Sigmoid colon (tissue), 7 donors: ENCODE measurements at regions of chr12 and their contacts with region 1.

Region 1: GRCh38 chr12:56189176-56189917 is at the start of gene SMARCC2:
- DNase-seq: peak; percentile 95
- H3K4me3 ChIP-seq: peak within 1 kb of the TSS; percentile 84 to 98 (median 93)
- H3K27ac ChIP-seq: peak within 1 kb of the TSS; percentile 91 to 95 (median 92)
- H3K4me1 ChIP-seq: peaks cover 0 to 32% (median 25%) of the 10 kb centered on the region in 4 donors
- H3K27me3 ChIP-seq: no peaks in the 10 kb centered on the region
- CTCF ChIP-seq: peak in 3 of 4 experiments; percentile 39 to 72 (median 63)
- EP300 ChIP-seq: no peak
- POLR2A ChIP-seq: no peak
- total RNA-seq, gene SMARCC2: 55.7 to 135 (median 70.7) TPM

Region 2: GRCh38 chr12:56117778-56118687 is 71.3 kb before region 1 on chr12 and contains the start of gene ZC3H10:
- intact Hi-C with region 1: loop called (anchors 1 kb)
- DNase-seq: peak; percentile 99
- H3K4me3 ChIP-seq: peak within 1 kb of the TSS; percentile 59 to 88 (median 68)
- H3K27ac ChIP-seq: peak within 1 kb of the TSS; percentile 87 to 98 (median 94)
- H3K4me1 ChIP-seq: peaks cover 0 to 46% (median 30%) of the 10 kb centered on the region in 4 donors
- H3K27me3 ChIP-seq: no peaks in the 10 kb centered on the region
- CTCF ChIP-seq: peak in 3 of 4 experiments; percentile 30 to 33 (median 32)
- EP300 ChIP-seq: peak in 2 of 4 donors; percentile 2 to 85
- POLR2A ChIP-seq: peak; percentile 88 to 91
- total RNA-seq, gene ZC3H10: 3.9 to 6.9 (median 4.8) TPM

Region 3: DNA sequence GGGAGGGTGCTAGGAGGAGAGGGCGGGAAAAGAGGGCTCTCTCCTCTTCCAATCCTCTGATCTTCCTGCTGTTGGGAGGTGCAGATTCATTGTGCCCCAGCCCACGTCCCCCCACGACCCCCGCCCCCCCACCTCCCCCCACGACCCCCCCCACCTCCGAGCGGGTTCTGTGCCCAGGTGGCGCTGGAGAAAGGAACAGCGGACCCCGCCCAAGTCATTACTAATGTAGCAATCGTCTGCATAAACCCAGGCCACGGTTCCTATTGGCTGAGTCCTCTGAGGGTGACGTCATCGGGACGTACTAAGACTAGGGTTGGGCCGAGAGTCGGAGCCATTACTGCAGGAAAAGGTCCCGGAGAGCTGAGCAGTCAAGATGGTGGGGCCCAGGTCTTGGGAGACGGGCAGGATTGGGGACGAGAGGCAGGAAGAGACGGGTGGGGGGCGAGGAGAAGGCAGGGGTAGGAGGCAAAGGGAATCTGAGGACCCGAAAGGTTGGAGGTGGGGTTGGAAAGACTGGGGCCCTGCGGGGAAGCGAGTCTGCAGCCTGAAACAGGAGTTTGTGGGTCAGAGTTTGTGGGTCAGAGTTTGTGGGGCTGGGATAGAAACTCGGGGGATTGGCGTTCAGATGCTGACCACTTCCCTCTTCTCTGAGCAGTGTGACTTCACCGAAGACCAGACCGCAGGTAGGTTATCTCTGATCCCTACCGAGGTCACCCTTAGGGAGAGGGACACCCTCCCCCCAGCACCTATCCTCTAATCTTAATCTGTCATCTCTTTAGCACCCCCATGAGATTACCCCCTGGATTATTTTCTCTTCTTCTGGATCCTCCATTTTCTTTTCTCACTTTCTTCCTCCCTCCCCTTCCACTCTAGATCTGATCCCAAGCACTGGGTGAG is 31.1 kb before region 1 on chr12 and contains the start of gene MYL6:
- intact Hi-C with region 1: loop called (anchors 1 kb)
- DNase-seq: peak; percentile 99
- H3K4me3 ChIP-seq: peak within 1 kb of the TSS; percentile 61 to 99 (median 78)
- H3K27ac ChIP-seq: peak within 1 kb of the TSS; percentile 93 to 99 (median 94)
- H3K4me1 ChIP-seq: peaks cover 0 to 59% (median 43%) of the 10 kb centered on the region in 4 donors
- H3K27me3 ChIP-seq: no peaks in the 10 kb centered on the region
- CTCF ChIP-seq: no peak
- EP300 ChIP-seq: no peak
- POLR2A ChIP-seq: peak; percentile 100
- total RNA-seq, gene MYL6: 6,491 to 9,553 (median 8,571) TPM

Region 4: GRCh38 chr12:56258057-56258819 is 68.9 kb after region 1 on chr12 and contains the start of gene ANKRD52:
- intact Hi-C with region 1: loop called (anchors 5 kb)
- DNase-seq: peak; percentile 87
- H3K4me3 ChIP-seq: peak within 1 kb of the TSS; percentile 80 to 86 (median 82)
- H3K27ac ChIP-seq: peak within 1 kb of the TSS; percentile 90 to 96 (median 92)
- H3K4me1 ChIP-seq: peaks cover 0 to 28% (median 26%) of the 10 kb centered on the region in 4 donors
- H3K27me3 ChIP-seq: no peaks in the 10 kb centered on the region
- CTCF ChIP-seq: peak in 2 of 4 experiments; percentile 11 to 90
- EP300 ChIP-seq: no peak
- POLR2A ChIP-seq: no peak
- total RNA-seq, gene ANKRD52: 8.4 to 19.1 (median 10.5) TPM

Region 5: DNA sequence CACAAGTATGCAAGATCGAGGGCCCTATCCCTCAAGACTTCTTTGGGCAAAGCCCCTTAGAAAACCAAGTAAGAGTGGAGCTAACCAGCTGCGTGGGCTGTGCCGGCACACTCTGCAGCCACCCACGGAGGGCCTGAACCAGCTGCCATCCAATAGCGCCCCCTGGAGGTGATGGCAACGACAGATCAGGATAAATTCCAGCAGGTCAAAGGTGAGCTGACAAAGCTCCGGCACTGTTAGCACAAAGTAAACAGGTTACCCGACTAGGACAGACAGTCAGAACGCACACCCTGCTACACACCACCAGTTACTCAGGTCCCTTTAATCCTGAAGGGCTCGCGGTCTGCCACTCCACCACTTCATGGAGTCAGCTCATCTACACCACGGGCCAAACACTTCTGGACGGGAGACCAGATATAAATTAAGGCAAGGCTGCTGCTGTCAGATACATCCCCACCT is 812.1 kb after region 1 on chr12:
- intact Hi-C with region 1: no loop called
- DNase-seq: peak; percentile 77
- H3K4me3 ChIP-seq: no peak overlapping the region
- H3K27ac ChIP-seq: no peak overlapping the region
- H3K4me1 ChIP-seq: peaks cover 0 to 33% (median 21%) of the 10 kb centered on the region in 4 donors
- H3K27me3 ChIP-seq: no peaks in the 10 kb centered on the region
- CTCF ChIP-seq: peak; percentile 17 to 57 (median 53)
- EP300 ChIP-seq: no peak
- POLR2A ChIP-seq: no peak